Activated T-helper 2 cell treated with anti-CD3 and anti-CD28 coated beads, Interferon-gamma antibody, Interleukin-2, Interleukin-4, amounts not matched to agents 10 μg/mL and 5 μg/mL and 100 μg/mL, durations not matched to agents 14 hours and 24 hours and 36 hours (primary cell): ENCODE measurements at regions of chr6 and their contacts with region 1.

Region 1: DNA sequence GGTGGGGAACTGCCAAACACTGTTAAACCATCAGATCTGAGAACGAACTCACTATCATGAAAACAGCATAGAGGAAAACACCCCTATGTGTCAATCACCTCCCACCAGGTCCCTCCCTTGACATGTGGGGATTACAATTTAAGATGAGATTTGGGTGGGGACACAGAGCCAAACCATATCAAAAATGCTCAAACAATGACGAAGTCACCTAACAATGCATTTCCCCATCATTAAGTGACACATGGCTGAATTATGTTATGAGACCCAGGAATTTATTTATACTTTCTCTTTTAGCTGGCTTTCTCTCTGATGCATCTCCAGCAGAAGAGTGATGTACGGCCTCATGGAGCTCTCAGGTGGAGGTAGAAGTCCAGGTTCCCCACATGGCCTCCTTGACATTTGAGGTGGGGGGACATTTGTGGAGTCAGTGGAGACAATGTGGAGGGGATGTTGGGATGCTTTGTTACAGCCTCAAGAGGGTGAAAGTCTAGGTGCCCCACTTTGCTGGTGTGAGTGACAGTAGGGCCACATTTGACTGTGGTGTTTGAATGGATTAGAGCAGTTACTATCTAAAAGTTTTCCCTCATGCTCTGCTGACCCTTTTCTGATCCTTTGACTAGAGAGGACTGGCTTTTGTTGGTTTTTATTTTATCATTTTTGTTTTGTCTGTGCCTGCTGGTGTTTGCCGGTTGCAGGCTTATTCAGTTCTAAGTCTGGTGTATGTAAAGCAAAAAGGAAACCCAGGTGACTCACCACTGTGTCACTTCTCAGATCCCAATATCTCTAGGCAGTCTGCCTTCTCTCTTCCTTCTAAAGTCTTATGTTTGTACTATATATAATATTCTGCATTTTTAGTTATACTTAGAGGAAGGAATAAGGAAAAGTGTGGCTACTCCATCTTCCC is 18.5 kb upstream of the DCBLD1 start:
- DNase-seq: no peak
- H3K4me3 Mint-ChIP-seq: no peak overlapping the region
- H3K27ac Mint-ChIP-seq: peak overlapping the region; percentile 28
- H3K4me1 Mint-ChIP-seq: peaks cover 23% of the 10 kb centered on the region
- H3K27me3 Mint-ChIP-seq: peaks cover 14% of the 10 kb centered on the region

Region 2: GRCh38 chr6:117025310-117025709 is 438.7 kb before region 1 on chr6:
- intact Hi-C with region 1: no loop called
- DNase-seq: no peak
- H3K4me3 Mint-ChIP-seq: no peak overlapping the region
- H3K27ac Mint-ChIP-seq: no peak overlapping the region
- H3K4me1 Mint-ChIP-seq: no peaks in the 10 kb centered on the region
- H3K27me3 Mint-ChIP-seq: no peaks in the 10 kb centered on the region

Region 3: DNA sequence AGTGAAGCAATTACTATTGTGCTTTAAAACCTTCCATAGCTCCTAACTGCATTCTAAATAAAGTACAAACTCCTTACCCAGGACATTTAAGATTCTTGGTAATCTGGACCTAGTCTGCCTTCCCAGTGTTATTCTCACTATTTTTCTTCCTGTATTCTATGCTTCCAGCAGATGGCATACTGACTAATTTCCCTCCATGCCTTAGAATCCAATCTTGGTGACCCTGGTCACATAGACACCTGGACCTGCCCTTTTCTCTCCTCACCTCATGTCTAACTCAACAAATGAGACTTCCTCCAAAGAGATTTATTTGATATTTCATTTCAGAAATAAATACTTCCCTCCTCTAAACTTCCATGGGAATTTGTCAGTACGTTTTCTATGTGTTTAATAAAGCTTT is 64.1 kb before region 1 on chr6:
- intact Hi-C with region 1: no loop called
- DNase-seq: no peak
- H3K4me3 Mint-ChIP-seq: no peak overlapping the region
- H3K27ac Mint-ChIP-seq: no peak overlapping the region
- H3K4me1 Mint-ChIP-seq: no peaks in the 10 kb centered on the region
- H3K27me3 Mint-ChIP-seq: no peaks in the 10 kb centered on the region

Region 4: GRCh38 chr6:117482240-117483003 is 18.4 kb after region 1 on chr6 and contains the start of gene DCBLD1:
- intact Hi-C with region 1: loop called (anchors 1 kb)
- DNase-seq: peak; percentile 56
- H3K4me3 Mint-ChIP-seq: peak within 1 kb of the TSS; percentile 86
- H3K27ac Mint-ChIP-seq: peak within 1 kb of the TSS; percentile 72
- H3K4me1 Mint-ChIP-seq: peaks cover 14% of the 10 kb centered on the region
- H3K27me3 Mint-ChIP-seq: peaks cover 47% of the 10 kb centered on the region
- total RNA-seq, gene DCBLD1: 4.0 and 7.5 TPM in 2 replicates

Region 5: DNA sequence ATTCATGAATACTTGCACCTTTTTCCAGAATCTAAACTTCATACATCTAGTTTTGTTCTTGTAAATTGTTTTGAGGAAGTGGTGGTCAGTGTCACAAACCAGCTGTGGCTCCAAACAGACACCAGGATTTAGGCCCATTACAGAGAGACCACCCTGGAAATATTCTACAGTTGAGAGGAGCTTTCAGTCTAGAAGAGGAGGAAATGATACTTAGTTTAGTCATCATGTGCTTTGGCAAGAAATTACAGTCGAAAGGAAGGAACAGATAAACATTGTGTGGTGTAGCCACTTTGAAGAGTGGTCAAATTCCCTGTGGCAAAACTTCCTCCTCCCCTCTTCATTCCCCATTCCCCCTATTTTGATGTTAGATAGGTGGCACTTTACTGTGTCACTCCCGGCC is 34.1 kb after region 1 on chr6:
- intact Hi-C with region 1: loop called (anchors 5 kb)
- DNase-seq: no peak
- H3K4me3 Mint-ChIP-seq: no peak overlapping the region
- H3K27ac Mint-ChIP-seq: no peak overlapping the region
- H3K4me1 Mint-ChIP-seq: peaks cover 17% of the 10 kb centered on the region
- H3K27me3 Mint-ChIP-seq: no peaks in the 10 kb centered on the region